Naive thymus-derived CD4-positive, alpha-beta T cell (primary cell): ENCODE measurements at regions of chr17 and their contacts with region 1.

Region 1: DNA sequence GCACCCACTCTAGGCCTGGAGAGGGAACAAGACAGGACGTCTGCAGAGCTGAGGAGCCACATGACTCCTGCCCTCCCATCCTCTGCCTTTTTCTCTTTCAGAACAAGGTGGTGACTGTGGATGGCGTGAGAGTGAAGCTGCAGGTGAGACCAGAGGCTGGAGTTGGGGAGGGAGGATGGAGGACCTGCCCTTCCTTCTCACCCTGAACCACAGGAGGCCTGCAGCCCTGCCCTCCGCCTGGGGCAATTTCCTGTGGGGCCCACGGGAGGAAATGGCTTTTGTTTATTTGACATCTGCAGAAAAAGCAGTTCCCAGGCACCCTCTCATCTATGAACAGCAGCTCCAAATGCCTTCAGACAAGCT is 5.1 kb downstream of the RAB37 start:
- DNase-seq: peak in 5 of 9 donors; percentile 42 to 65 (median 45)
- ATAC-seq: peak; percentile 17
- H3K4me3 ChIP-seq: peak overlapping the region; percentile 10
- H3K4me3 Mint-ChIP-seq: peak overlapping the region; percentile 64 to 90 (median 84)
- H3K27ac ChIP-seq: peak overlapping the region; percentile 63
- H3K27ac Mint-ChIP-seq: peak overlapping the region; percentile 88 to 99 (median 95)
- H3K4me1 ChIP-seq: peaks cover 80 to 83% of the 10 kb centered on the region in 2 donors
- H3K4me1 Mint-ChIP-seq: peaks cover 71 to 93% (median 82%) of the 10 kb centered on the region in 7 donors
- H3K27me3 ChIP-seq: no peaks in the 10 kb centered on the region
- H3K27me3 Mint-ChIP-seq: no peaks in the 10 kb centered on the region

Region 2: DNA sequence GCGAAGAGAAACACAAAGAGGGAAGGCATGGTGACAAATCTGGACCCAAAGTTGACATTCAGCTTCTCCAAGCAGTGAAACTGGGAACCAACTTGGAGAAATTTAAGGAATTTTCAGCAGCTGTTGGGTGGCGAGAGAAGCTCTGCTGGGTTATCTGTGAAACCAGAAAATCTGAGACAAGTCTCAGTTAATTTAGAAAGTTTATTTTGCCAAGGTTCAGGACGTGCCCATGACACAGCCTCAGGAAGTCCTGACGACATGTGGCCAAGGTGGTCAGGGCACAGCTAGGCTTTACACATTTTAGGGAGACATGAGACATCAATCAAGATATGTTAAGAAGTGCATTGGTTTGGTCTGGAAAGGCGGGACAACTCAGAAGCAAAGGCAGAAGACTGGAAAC is 18.2 kb before region 1 on chr17:
- CTCF ChIA-PET with region 1: no interaction called
- POLR2A ChIA-PET with region 1: no interaction called
- intact Hi-C with region 1: no loop called
- DNase-seq: no peak
- ATAC-seq: no peak
- H3K4me3 ChIP-seq: no peak overlapping the region
- H3K4me3 Mint-ChIP-seq: no peak overlapping the region
- H3K27ac ChIP-seq: no peak overlapping the region
- H3K27ac Mint-ChIP-seq: no peak overlapping the region
- H3K4me1 ChIP-seq: peaks cover 0 to 6% of the 10 kb centered on the region in 2 donors
- H3K4me1 Mint-ChIP-seq: no peaks in the 10 kb centered on the region
- H3K27me3 ChIP-seq: no peaks in the 10 kb centered on the region
- H3K27me3 Mint-ChIP-seq: peaks cover 0 to 26% (median 0%) of the 10 kb centered on the region in 5 donors

Region 3: GRCh38 chr17:74759243-74759801 is 17.2 kb after region 1 on chr17:
- CTCF ChIA-PET with region 1: interaction called, 56 read pairs
- POLR2A ChIA-PET with region 1: interaction called, 34 read pairs
- intact Hi-C with region 1: loop called in 1 of 2 experiments (anchors 2 kb)
- DNase-seq: peak in 6 of 9 donors; percentile 47 to 60 (median 56)
- ATAC-seq: peak; percentile 86
- H3K4me3 ChIP-seq: peak overlapping the region; percentile 60
- H3K4me3 Mint-ChIP-seq: peak overlapping the region; percentile 82 to 92 (median 84)
- H3K27ac ChIP-seq: peak overlapping the region; percentile 49
- H3K27ac Mint-ChIP-seq: peak overlapping the region; percentile 75 to 97 (median 90)
- H3K4me1 ChIP-seq: peaks cover 69 to 82% of the 10 kb centered on the region in 2 donors
- H3K4me1 Mint-ChIP-seq: peaks cover 44 to 78% (median 62%) of the 10 kb centered on the region in 7 donors
- H3K27me3 ChIP-seq: no peaks in the 10 kb centered on the region
- H3K27me3 Mint-ChIP-seq: no peaks in the 10 kb centered on the region

Region 4: GRCh38 chr17:74770498-74771318 is 28.6 kb after region 1 on chr17:
- CTCF ChIA-PET with region 1: interaction called, 44 read pairs
- POLR2A ChIA-PET with region 1: interaction called, 372 read pairs
- intact Hi-C with region 1: loop called (anchors 1 kb)
- DNase-seq: peak; percentile 66 to 82 (median 78)
- ATAC-seq: peak; percentile 95
- H3K4me3 ChIP-seq: no peak overlapping the region
- H3K4me3 Mint-ChIP-seq: peak overlapping the region in 2 of 10 donors; percentile 16 to 21
- H3K27ac ChIP-seq: peak overlapping the region; percentile 4
- H3K27ac Mint-ChIP-seq: peak overlapping the region; percentile 42 to 92 (median 76)
- H3K4me1 ChIP-seq: peaks cover 9 to 17% of the 10 kb centered on the region in 2 donors
- H3K4me1 Mint-ChIP-seq: peaks cover 10 to 46% (median 38%) of the 10 kb centered on the region in 7 donors
- H3K27me3 ChIP-seq: no peaks in the 10 kb centered on the region
- H3K27me3 Mint-ChIP-seq: no peaks in the 10 kb centered on the region

Region 5: DNA sequence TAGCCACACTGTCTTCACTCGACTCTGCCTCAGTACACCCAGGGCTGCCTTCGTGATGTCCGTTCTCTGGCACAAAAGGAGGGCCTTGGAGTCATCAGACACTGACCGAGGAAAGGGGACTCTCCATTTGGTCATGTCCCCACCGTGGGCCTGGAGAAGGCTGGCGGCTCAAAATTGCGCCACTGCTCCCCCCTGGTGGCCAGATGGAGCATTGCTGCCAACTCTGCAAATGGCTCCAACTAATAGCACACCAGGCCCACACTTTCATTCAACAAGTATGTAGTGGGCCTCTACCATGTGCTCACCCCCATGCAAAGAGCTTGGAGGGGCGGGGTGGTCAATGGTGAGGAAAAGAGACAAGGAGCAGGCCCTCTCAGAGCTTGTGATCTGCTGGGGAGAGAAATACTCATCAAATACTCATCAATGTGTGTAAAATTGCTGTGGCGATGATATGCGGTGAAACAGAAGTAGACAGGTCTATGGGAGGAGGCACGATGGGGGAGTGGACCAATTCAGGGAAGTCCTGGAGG is 122.8 kb after region 1 on chr17:
- CTCF ChIA-PET with region 1: interaction called, 26 read pairs
- POLR2A ChIA-PET with region 1: interaction called, 4 read pairs
- intact Hi-C with region 1: loop called (anchors 1 kb)
- DNase-seq: peak; percentile 35 to 73 (median 59)
- ATAC-seq: peak; percentile 74
- H3K4me3 ChIP-seq: no peak overlapping the region
- H3K4me3 Mint-ChIP-seq: peak overlapping the region in 1 of 10 donors; percentile 35
- H3K27ac ChIP-seq: no peak overlapping the region
- H3K27ac Mint-ChIP-seq: peak overlapping the region in 2 of 9 donors; percentile 16 to 47
- H3K4me1 ChIP-seq: peaks cover 12 to 14% of the 10 kb centered on the region in 2 donors
- H3K4me1 Mint-ChIP-seq: peaks cover 0 to 23% (median 16%) of the 10 kb centered on the region in 7 donors
- H3K27me3 ChIP-seq: peaks cover 4 to 7% of the 10 kb centered on the region in 2 donors
- H3K27me3 Mint-ChIP-seq: peaks cover 3 to 24% (median 11%) of the 10 kb centered on the region in 5 donors